Naive thymus-derived CD4-positive, alpha-beta T cell (primary cell): ENCODE measurements at regions of chr15 and their contacts with region 1.

Region 1: GRCh38 chr15:44286814-44287452 is 1.6 kb upstream of the GOLM2 start:
- DNase-seq: peak in 4 of 9 donors; percentile 9 to 30 (median 19)
- ATAC-seq: no peak
- H3K4me3 ChIP-seq: peak overlapping the region; percentile 85
- H3K4me3 Mint-ChIP-seq: peak overlapping the region; percentile 90 to 99 (median 96)
- H3K27ac ChIP-seq: peak overlapping the region; percentile 86
- H3K27ac Mint-ChIP-seq: peak overlapping the region; percentile 95 to 100 (median 99)
- H3K4me1 ChIP-seq: peaks cover 12 to 13% of the 10 kb centered on the region in 2 donors
- H3K4me1 Mint-ChIP-seq: peaks cover 30 to 50% (median 45%) of the 10 kb centered on the region in 7 donors
- H3K27me3 ChIP-seq: no peaks in the 10 kb centered on the region
- H3K27me3 Mint-ChIP-seq: peaks cover 0 to 17% (median 3%) of the 10 kb centered on the region in 5 donors

Region 2: GRCh38 chr15:43150191-43150929 is 1136.6 kb before region 1 on chr15:
- CTCF ChIA-PET with region 1: no interaction called
- POLR2A ChIA-PET with region 1: no interaction called
- intact Hi-C with region 1: no loop called
- DNase-seq: no peak
- ATAC-seq: no peak
- H3K4me3 ChIP-seq: no peak overlapping the region
- H3K4me3 Mint-ChIP-seq: no peak overlapping the region
- H3K27ac ChIP-seq: no peak overlapping the region
- H3K27ac Mint-ChIP-seq: no peak overlapping the region
- H3K4me1 ChIP-seq: peaks cover 4 to 5% of the 10 kb centered on the region in 2 donors
- H3K4me1 Mint-ChIP-seq: peaks cover 5 to 21% (median 14%) of the 10 kb centered on the region in 7 donors
- H3K27me3 ChIP-seq: no peaks in the 10 kb centered on the region
- H3K27me3 Mint-ChIP-seq: no peaks in the 10 kb centered on the region

Region 3: GRCh38 chr15:43791993-43792760 is 494.8 kb before region 1 on chr15 and contains the start of gene SERF2:
- CTCF ChIA-PET with region 1: no interaction called
- POLR2A ChIA-PET with region 1: interaction called, 3 read pairs
- intact Hi-C with region 1: loop called in 1 of 2 experiments (anchors 2 kb)
- DNase-seq: peak; percentile 92 to 99 (median 97)
- ATAC-seq: peak; percentile 97
- H3K4me3 ChIP-seq: peak within 1 kb of the TSS; percentile 98
- H3K4me3 Mint-ChIP-seq: peak within 1 kb of the TSS; percentile 93 to 98 (median 96)
- H3K27ac ChIP-seq: peak within 1 kb of the TSS; percentile 100
- H3K27ac Mint-ChIP-seq: peak within 1 kb of the TSS; percentile 91 to 99 (median 98)
- H3K4me1 ChIP-seq: peaks cover 9 to 22% of the 10 kb centered on the region in 2 donors
- H3K4me1 Mint-ChIP-seq: peaks cover 33 to 54% (median 48%) of the 10 kb centered on the region in 7 donors
- H3K27me3 ChIP-seq: no peaks in the 10 kb centered on the region
- H3K27me3 Mint-ChIP-seq: peaks cover 0 to 2% (median 0%) of the 10 kb centered on the region in 5 donors
- total RNA-seq, gene SERF2: 358 to 676 (median 553) TPM

Region 4: GRCh38 chr15:44195151-44195740 is 91.7 kb before region 1 on chr15 and contains the start of gene FRMD5:
- CTCF ChIA-PET with region 1: no interaction called
- POLR2A ChIA-PET with region 1: no interaction called
- intact Hi-C with region 1: loop called (anchors 1 kb)
- DNase-seq: peak; percentile 70 to 90 (median 85)
- ATAC-seq: peak; percentile 98
- H3K4me3 ChIP-seq: peak within 1 kb of the TSS; percentile 67
- H3K4me3 Mint-ChIP-seq: peak within 1 kb of the TSS; percentile 76 to 94 (median 90)
- H3K27ac ChIP-seq: no peak within 1 kb of the TSS
- H3K27ac Mint-ChIP-seq: peak within 1 kb of the TSS in 4 of 9 donors; percentile 10 to 43 (median 38)
- H3K4me1 ChIP-seq: peaks cover 4 to 11% of the 10 kb centered on the region in 2 donors
- H3K4me1 Mint-ChIP-seq: peaks cover 6 to 26% (median 18%) of the 10 kb centered on the region in 7 donors
- H3K27me3 ChIP-seq: peaks cover 4 to 9% of the 10 kb centered on the region in 2 donors
- H3K27me3 Mint-ChIP-seq: peaks cover 62 to 77% (median 72%) of the 10 kb centered on the region in 5 donors
- total RNA-seq, gene FRMD5: 0.35 TPM in 1 of 5 experiments, not detected in the others

Region 5: DNA sequence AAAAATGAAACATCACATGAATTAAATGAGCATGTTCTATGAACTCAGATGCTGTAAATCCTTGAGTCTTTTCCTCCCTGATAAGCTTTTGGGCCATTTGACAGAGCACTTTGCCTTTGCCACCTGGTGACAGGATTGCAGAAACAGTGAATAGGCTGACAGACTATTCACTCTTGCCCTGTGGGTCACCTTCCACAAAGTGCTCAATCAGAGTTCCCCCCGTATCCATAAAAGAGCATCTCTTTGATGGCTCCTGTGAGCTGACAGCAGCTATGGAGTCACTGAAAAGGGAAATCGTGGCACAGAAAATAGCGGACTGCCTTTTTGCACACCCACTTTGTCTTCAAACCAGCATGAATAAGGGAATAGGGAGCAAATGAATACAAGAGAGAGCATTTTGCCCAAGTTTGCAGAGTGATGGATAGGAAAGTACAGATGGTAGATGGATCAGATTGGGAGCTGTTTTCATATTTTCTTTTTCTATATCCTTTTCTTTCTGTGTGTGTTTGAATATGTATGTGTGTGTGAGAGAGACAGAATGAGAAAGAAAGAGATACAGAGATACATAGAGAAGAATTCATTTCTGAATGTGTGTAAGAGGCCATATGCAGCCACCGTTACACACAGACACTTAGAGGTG is 36.2 kb before region 1 on chr15:
- CTCF ChIA-PET with region 1: no interaction called
- POLR2A ChIA-PET with region 1: no interaction called
- intact Hi-C with region 1: no loop called
- DNase-seq: no peak
- ATAC-seq: no peak
- H3K4me3 ChIP-seq: no peak overlapping the region
- H3K4me3 Mint-ChIP-seq: no peak overlapping the region
- H3K27ac ChIP-seq: no peak overlapping the region
- H3K27ac Mint-ChIP-seq: no peak overlapping the region
- H3K4me1 ChIP-seq: no peaks in the 10 kb centered on the region
- H3K4me1 Mint-ChIP-seq: peaks cover 0 to 4% (median 0%) of the 10 kb centered on the region in 7 donors
- H3K27me3 ChIP-seq: peaks cover 0 to 3% of the 10 kb centered on the region in 2 donors
- H3K27me3 Mint-ChIP-seq: peaks cover 0 to 14% (median 8%) of the 10 kb centered on the region in 5 donors

Region 6: DNA sequence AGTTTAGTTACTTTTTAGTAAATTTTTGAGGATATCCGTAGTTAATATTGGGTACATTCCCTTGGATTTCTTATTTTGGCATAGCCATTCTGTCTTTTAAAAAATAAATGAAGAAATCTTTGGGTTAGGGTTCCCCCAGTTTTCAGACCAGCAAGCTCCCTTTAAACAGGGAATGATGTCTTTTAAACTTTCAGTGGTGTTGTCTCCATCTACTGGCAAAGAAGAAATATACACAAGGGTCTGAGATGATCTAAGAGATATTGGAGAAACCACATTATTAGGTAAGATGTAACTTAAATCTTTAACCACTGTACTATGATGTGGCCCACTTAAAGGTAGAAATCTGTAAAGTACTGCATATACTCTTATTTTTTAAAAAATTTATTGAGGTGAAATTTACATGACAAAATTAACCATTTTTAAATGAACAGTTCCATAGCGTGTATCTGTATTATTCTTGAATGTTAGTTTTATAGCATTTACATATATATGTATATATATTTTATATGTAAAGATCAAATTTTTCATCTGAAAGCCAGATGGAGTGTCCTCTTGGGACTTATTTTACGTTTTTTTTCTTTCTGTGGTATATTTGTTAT is 214.9 kb after region 1 on chr15:
- CTCF ChIA-PET with region 1: interaction called, 3 read pairs
- POLR2A ChIA-PET with region 1: no interaction called
- intact Hi-C with region 1: loop called (anchors 1 to 2 kb)
- DNase-seq: peak in 5 of 9 donors; percentile 24 to 35 (median 29)
- ATAC-seq: peak; percentile 69
- H3K4me3 ChIP-seq: no peak overlapping the region
- H3K4me3 Mint-ChIP-seq: no peak overlapping the region
- H3K27ac ChIP-seq: no peak overlapping the region
- H3K27ac Mint-ChIP-seq: no peak overlapping the region
- H3K4me1 ChIP-seq: no peaks in the 10 kb centered on the region
- H3K4me1 Mint-ChIP-seq: peaks cover 0 to 21% (median 19%) of the 10 kb centered on the region in 7 donors
- H3K27me3 ChIP-seq: no peaks in the 10 kb centered on the region
- H3K27me3 Mint-ChIP-seq: no peaks in the 10 kb centered on the region

Region 7: DNA sequence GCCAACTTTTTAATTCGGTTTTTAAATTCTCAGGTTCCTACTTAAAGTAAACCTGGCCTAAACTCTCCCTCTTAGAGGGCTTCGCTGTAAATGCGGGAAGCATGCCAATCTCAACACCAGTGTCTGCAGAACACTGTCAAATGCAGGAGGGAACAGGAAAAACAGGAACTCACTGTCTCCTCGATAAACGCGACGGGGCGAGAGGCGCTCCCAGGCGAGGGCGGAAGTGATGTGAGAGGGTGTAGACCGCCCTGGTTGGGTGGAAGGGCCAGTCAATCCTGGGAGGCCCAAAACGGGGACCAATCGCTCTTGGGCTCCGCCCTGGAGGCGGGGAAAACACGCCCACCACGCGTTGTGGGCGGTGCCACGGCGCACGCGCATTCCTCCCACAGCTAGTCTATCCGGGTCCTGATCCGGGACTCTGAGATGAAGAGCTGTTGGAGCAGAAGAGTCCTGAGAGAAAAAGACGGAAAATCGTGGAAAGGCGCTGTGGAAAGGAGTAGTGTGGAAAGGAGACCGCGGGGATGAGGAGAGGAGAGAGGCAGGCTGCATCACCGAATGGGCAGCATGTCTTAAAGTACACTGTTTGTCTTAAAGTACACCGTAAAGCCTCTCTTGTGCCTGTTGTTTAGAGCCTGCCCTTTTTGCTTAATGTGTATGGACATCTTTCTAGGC is 992.2 kb after region 1 on chr15:
- CTCF ChIA-PET with region 1: no interaction called
- POLR2A ChIA-PET with region 1: no interaction called
- intact Hi-C with region 1: loop called in 1 of 2 experiments (anchors 2 kb)
- DNase-seq: peak; percentile 93 to 99 (median 98)
- ATAC-seq: peak; percentile 100
- H3K4me3 ChIP-seq: peak overlapping the region; percentile 90
- H3K4me3 Mint-ChIP-seq: peak overlapping the region; percentile 90 to 99 (median 95)
- H3K27ac ChIP-seq: peak overlapping the region; percentile 84
- H3K27ac Mint-ChIP-seq: peak overlapping the region; percentile 84 to 99 (median 93)
- H3K4me1 ChIP-seq: peaks cover 9 to 12% of the 10 kb centered on the region in 2 donors
- H3K4me1 Mint-ChIP-seq: peaks cover 10 to 34% (median 23%) of the 10 kb centered on the region in 7 donors
- H3K27me3 ChIP-seq: no peaks in the 10 kb centered on the region
- H3K27me3 Mint-ChIP-seq: peaks cover 0 to 1% (median 0%) of the 10 kb centered on the region in 5 donors

Region 8: DNA sequence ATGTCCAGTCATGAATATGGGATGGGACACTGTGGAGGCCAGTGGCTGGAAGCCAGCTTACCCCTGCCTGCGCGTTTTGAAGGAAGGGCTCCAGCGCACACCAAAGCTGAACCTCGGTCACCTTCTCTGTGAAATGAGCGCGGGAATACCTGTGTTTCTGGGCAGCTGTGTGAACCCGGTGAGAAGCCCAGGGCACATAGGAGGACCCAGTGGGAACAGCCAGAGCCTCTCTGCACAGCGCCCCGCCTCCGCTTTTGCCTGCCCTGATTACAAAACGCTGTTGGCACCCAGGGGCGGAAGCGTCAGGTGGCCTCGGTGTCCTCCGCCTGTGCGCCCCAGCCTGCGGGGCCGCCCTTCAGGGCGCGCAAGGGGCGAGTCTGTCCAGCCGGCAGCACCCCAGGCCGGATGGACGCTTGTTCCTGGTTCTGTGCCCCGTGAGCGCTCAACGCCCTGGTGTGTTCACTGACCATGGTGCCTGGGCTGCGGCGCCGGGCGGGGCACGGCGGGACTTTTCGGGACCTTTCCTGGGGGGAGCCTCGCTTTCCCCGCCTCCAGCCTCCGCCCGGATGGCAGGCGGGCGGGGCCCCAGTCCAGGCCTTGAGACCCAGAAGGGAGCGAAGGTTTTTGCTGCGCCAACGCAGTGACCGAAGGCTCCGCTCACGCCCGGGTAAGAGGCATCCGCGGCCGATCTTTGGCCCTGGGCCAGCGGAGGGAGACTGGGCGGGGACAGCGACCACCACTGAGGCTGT is 1347.7 kb after region 1 on chr15 and contains the start of gene SQOR:
- CTCF ChIA-PET with region 1: no interaction called
- POLR2A ChIA-PET with region 1: no interaction called
- intact Hi-C with region 1: loop called in 1 of 2 experiments (anchors 10 kb)
- DNase-seq: peak; percentile 46 to 78 (median 58)
- ATAC-seq: peak; percentile 72
- H3K4me3 ChIP-seq: peak within 1 kb of the TSS; percentile 84
- H3K4me3 Mint-ChIP-seq: peak within 1 kb of the TSS; percentile 91 to 98 (median 96)
- H3K27ac ChIP-seq: peak within 1 kb of the TSS; percentile 69
- H3K27ac Mint-ChIP-seq: peak within 1 kb of the TSS; percentile 84 to 96 (median 91)
- H3K4me1 ChIP-seq: peaks cover 24 to 27% of the 10 kb centered on the region in 2 donors
- H3K4me1 Mint-ChIP-seq: peaks cover 24 to 46% (median 42%) of the 10 kb centered on the region in 7 donors
- H3K27me3 ChIP-seq: no peaks in the 10 kb centered on the region
- H3K27me3 Mint-ChIP-seq: peaks cover 0 to 13% (median 0%) of the 10 kb centered on the region in 5 donors
- total RNA-seq, gene SQOR: 20.6 to 115 (median 32.6) TPM